ENCODE measurements at regions of chr7 and their contacts with region 1.

Region 1: DNA sequence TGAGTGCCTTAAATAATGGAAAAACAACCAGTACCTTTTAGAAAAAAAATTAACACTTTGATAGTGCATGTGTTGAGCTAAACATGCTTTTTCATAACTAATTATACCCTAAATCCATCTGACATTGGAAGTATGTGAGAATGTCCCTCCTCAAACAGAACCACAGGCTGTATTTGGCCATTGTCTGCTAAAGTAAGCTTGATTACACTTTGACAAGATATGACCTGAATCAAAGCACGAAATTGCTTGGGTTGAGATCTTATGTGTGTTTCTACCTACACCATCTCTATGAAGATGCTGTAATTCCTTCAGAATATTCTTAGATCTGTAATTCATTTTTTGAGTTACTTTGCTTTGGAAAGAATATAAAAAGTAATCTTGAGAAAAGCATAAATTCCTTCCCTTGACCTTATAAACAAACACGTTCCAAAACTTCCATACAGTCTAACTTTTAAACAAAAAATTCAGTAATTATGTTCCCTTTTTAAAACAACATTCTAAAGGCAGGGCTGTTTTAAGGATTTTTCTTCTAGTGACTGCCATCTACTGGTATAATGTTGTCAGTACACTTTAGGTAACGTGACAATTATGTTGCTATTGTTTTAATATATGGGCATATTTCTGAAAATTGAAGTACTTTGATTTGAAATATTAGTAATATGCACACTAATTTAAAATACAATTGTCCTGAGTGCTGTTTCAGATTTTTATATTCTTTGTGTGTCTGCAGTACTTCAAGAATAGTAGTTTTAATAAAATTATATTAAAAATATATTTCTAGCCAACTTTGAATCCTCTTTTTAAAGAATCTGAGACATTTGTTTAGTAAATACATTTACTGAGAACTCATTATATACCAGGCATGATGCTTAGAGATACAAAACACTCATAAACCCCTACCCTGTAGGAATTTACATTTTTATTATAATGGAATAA is 20.9 kb downstream of the CD36 start:
- DNase-seq: no peak
- H3K4me3 Mint-ChIP-seq: no peak overlapping the region
- H3K27ac Mint-ChIP-seq: no peak overlapping the region
- H3K4me1 Mint-ChIP-seq: no peaks in the 10 kb centered on the region
- H3K27me3 Mint-ChIP-seq: no peaks in the 10 kb centered on the region
- CTCF ChIP-seq: no peak

Region 2: DNA sequence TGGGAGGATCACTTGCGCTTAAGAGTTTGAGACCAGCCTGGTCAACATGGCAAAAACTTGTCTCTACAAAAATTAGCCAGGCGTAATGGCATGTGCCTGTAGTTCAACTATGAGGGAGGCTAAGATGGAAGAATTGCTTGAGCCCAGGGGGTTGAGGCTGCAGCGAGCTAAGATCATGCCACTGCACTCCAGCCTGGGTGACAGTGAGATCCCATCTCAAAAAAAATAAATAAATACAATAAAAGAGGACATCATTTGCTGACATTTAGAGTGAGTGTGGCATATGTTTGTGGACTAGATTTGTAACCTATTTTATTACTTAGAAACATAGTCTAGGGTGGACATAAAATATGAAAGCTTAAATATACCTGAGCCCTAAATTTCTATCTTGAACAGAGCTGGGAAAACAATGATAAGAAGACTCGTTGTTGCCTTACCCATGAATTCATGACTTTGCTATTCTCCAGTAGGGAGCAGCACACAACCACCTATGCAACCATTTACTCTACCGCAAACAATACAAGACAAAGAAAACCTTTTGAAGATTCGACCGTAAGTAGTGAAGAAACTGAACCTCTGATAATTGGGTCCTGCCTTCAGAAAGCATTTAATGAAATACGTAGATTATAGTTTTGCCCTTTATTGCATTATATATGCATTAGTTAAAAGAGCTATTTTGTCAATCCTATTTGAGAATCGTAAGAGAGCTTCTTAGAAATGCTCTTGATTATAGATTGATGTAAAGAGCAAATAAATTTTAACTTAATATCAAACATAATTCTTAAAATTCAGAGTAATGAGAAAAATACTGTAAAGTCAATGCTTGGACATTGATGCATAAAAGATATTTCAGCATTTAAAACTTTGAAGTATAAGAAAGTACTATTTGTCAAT is 231.0 kb before region 1 on chr7:
- CTCF ChIA-PET with region 1: no interaction called
- intact Hi-C with region 1: loop called (anchors 1 kb)
- DNase-seq: peak; percentile 13
- H3K4me3 Mint-ChIP-seq: no peak overlapping the region
- H3K27ac Mint-ChIP-seq: no peak overlapping the region
- H3K4me1 Mint-ChIP-seq: no peaks in the 10 kb centered on the region
- H3K27me3 Mint-ChIP-seq: no peaks in the 10 kb centered on the region
- CTCF ChIP-seq: peak; percentile 32

Region 3: DNA sequence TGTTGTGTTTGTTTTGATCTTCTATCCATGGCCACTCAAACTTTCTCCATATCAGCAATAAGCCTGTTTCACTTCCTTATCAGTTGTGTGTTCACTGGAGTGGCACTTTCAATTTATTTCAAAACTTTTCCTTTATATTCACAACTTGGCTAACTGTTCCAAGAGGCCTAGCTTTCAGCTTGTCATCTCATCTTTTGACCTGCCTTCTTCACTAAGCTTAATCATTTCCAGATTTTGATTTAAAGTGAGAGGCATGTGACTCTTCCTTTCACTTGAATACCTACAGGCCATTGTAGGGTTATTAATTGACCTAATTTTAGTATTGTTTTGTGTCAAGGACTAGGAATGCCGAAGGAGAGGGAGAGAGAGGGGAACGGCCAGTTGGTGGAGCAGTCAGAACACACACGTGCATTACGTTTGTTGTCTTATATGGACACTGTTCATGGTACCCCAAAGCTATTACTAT is 142.1 kb before region 1 on chr7:
- CTCF ChIA-PET with region 1: no interaction called
- intact Hi-C with region 1: loop called (anchors 5 kb)
- DNase-seq: no peak
- H3K4me3 Mint-ChIP-seq: no peak overlapping the region
- H3K27ac Mint-ChIP-seq: no peak overlapping the region
- H3K4me1 Mint-ChIP-seq: peaks cover 10% of the 10 kb centered on the region
- H3K27me3 Mint-ChIP-seq: no peaks in the 10 kb centered on the region
- CTCF ChIP-seq: no peak